ENCODE measurements at regions of chr18 and their contacts with region 1.

Region 1: GRCh38 chr18:61581578-61582201 is 248.5 kb downstream of the CDH20 start:
- DNase-seq: no peak
- H3K4me3 ChIP-seq: peak overlapping the region; percentile 43
- H3K27me3 ChIP-seq: no peaks in the 10 kb centered on the region
- CTCF ChIP-seq: peak; percentile 99

Region 2: DNA sequence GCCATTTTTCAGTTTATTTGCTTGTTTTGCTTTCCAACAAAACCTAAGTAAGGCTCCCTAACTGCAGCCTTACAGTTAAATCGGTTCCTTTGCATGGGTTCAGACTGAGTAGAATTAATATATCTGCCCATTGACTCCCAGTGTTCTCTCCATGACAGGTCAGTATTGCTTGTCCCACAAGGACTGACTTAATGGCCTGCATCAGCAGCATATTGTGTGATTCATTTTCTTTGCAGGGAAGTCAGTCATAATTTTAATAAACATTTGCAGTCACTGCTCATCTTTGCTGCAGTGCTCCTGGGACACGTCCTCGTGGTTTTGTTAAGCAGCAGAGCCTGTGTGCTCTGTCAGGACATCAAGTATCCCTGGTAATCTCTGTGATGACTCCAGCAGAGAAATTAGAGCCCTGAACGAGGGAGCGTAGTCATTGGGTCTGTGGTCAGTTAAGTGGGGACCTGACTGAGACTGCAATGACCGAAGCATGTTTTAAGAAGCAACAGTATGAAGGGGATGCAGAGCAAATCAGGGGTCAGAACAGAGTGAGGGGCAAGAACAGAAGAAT is 155.1 kb before region 1 on chr18:
- CTCF ChIA-PET with region 1: no interaction called
- POLR2A ChIA-PET with region 1: no interaction called
- DNase-seq: no peak
- H3K4me3 ChIP-seq: no peak overlapping the region
- H3K27me3 ChIP-seq: no peaks in the 10 kb centered on the region
- CTCF ChIP-seq: no peak

Region 3: GRCh38 chr18:61569176-61569892 is 12.4 kb before region 1 on chr18:
- CTCF ChIA-PET with region 1: interaction called, 10 read pairs
- POLR2A ChIA-PET with region 1: no interaction called
- DNase-seq: peak; percentile 33
- H3K4me3 ChIP-seq: no peak overlapping the region
- H3K27me3 ChIP-seq: no peaks in the 10 kb centered on the region
- CTCF ChIP-seq: no peak

Region 4: DNA sequence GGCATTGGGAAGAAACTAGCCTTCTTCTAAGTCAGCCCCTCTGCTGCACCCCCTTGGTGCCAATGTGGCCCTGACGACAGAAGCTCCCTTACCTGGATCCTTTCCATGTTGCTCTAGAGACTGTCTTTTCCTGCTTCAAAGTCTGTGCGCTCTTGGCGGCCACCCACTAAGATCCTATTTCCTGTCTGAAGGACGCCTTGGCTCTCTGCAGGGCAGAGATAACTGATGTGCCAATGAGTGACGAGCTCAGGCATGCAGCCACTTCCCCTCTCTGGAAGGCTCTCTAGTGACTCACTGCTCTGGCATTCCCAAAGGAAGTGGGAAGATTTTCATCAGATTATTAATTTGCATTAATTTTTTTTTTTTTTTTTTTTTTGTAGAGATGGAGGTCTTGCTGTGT is 25.1 kb after region 1 on chr18:
- CTCF ChIA-PET with region 1: interaction called, 11 read pairs
- POLR2A ChIA-PET with region 1: no interaction called
- DNase-seq: peak; percentile 44
- H3K4me3 ChIP-seq: peak overlapping the region; percentile 33
- H3K27me3 ChIP-seq: no peaks in the 10 kb centered on the region
- CTCF ChIP-seq: no peak

Region 5: GRCh38 chr18:61635901-61636528 is 54.3 kb after region 1 on chr18:
- CTCF ChIA-PET with region 1: interaction called, 24 read pairs
- POLR2A ChIA-PET with region 1: interaction called, 3 read pairs
- DNase-seq: peak; percentile 4
- H3K4me3 ChIP-seq: no peak overlapping the region
- H3K27me3 ChIP-seq: no peaks in the 10 kb centered on the region
- CTCF ChIP-seq: peak; percentile 89

Region 6: GRCh38 chr18:61679836-61680235 is 98.1 kb after region 1 on chr18:
- CTCF ChIA-PET with region 1: no interaction called
- POLR2A ChIA-PET with region 1: no interaction called
- DNase-seq: no peak
- H3K4me3 ChIP-seq: no peak overlapping the region
- H3K27me3 ChIP-seq: no peaks in the 10 kb centered on the region; the same call in 1 of the 2 replicates
- CTCF ChIP-seq: no peak

Region 7: DNA sequence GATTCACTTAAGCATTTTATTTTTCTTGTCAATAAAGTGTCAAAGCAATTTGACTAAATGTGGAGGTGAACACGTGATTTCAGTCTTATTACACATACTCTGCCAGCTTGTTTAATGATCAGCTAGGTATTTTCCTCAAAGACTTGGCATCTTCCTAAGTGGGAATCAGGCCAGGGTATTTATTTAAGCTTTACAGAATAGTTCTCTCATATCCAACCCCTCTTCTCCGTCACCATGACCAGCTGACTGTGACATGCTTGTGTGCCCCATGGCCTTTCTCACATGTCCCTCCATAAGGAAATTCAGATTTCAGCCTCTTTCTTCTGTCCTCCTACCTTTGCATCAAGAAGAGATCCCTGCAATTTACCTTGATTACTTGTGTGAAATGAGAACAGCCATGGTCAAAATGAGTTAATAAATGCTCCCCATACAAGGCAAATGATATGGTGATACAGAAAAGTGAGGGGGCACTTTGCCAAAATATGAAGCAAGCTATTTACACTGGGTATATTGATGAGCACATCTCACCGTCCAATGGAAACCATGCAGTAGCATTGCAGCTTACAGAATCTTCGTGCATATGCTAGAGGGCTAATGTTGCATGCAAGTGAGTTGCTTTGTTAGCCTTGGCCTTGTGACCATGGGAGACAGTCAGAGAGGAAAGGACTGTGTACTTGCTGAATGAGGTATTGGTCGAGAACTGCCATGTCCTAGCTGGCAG is 108.9 kb after region 1 on chr18:
- CTCF ChIA-PET with region 1: no interaction called
- POLR2A ChIA-PET with region 1: no interaction called
- DNase-seq: no peak
- H3K4me3 ChIP-seq: no peak overlapping the region
- H3K27me3 ChIP-seq: no peaks in the 10 kb centered on the region
- CTCF ChIP-seq: no peak